ENCODE measurements at regions of chr5 and their contacts with region 1.

Region 1: DNA sequence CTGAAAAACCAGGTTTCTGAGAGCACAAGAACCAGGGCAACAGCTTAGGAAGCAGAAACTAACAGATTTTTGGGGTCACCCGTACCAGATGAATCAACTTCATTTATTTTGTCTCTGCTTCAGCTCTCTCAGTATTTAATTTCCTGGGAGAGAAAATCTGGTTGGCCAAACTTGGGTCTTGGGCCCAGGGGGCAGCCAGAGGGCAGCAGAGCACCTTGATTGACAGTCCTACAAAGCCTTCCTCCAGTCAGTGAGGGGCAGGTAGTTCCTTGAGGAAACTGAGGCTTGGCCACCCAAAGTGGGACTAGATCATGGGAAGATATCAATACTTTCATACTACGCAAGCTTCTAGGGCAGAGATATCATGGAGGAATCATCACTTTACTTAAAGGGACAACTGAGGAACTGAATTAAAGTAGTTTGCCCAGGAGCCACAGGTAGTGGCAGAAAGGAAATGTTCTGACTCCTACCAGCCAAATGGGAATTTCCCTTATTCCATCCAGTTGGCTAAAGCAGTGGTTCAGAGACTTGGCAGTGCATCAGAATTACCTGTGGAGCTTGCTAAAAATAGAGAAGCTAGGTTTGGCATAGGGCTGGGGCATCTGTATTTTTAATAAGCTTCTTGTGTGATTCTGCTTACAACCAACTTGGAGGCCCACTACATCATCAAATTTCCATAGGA is 21.5 kb upstream of the ARHGAP26 start:
- DNase-seq: no peak
- H3K4me3 Mint-ChIP-seq: no peak overlapping the region
- H3K27ac Mint-ChIP-seq: no peak overlapping the region
- H3K4me1 Mint-ChIP-seq: peaks cover 16% of the 10 kb centered on the region
- H3K27me3 Mint-ChIP-seq: peaks cover 2% of the 10 kb centered on the region

Region 2: GRCh38 chr5:142551338-142552067 is 197.2 kb before region 1 on chr5:
- intact Hi-C with region 1: no loop called
- DNase-seq: no peak
- H3K4me3 Mint-ChIP-seq: no peak overlapping the region
- H3K27ac Mint-ChIP-seq: no peak overlapping the region
- H3K4me1 Mint-ChIP-seq: peaks cover 6% of the 10 kb centered on the region
- H3K27me3 Mint-ChIP-seq: peaks cover 51% of the 10 kb centered on the region

Region 3: GRCh38 chr5:142872795-142873194 is 124.1 kb after region 1 on chr5:
- intact Hi-C with region 1: loop called (anchors 1 kb)
- DNase-seq: no peak
- H3K4me3 Mint-ChIP-seq: no peak overlapping the region
- H3K27ac Mint-ChIP-seq: no peak overlapping the region
- H3K4me1 Mint-ChIP-seq: peaks cover 13% of the 10 kb centered on the region
- H3K27me3 Mint-ChIP-seq: peaks cover 3% of the 10 kb centered on the region

Region 4: GRCh38 chr5:142881076-142881783 is 132.5 kb after region 1 on chr5:
- intact Hi-C with region 1: loop called (anchors 1 kb)
- DNase-seq: no peak
- H3K4me3 Mint-ChIP-seq: no peak overlapping the region
- H3K27ac Mint-ChIP-seq: no peak overlapping the region
- H3K4me1 Mint-ChIP-seq: peaks cover 6% of the 10 kb centered on the region
- H3K27me3 Mint-ChIP-seq: no peaks in the 10 kb centered on the region

Region 5: GRCh38 chr5:142888469-142889085 is 139.9 kb after region 1 on chr5:
- intact Hi-C with region 1: loop called (anchors 1 kb)
- DNase-seq: no peak
- H3K4me3 Mint-ChIP-seq: no peak overlapping the region
- H3K27ac Mint-ChIP-seq: no peak overlapping the region
- H3K4me1 Mint-ChIP-seq: peaks cover 19% of the 10 kb centered on the region
- H3K27me3 Mint-ChIP-seq: no peaks in the 10 kb centered on the region